ENCODE measurements at regions of chr1 and their contacts with region 1.

Region 1: GRCh38 chr1:161045750-161046571 is at the start of gene USF1:
- DNase-seq: peak; percentile 94 to 98 (median 95)
- ATAC-seq: peak; percentile 92
- H3K4me3 ChIP-seq: peak within 1 kb of the TSS; percentile 75
- H3K27ac ChIP-seq: peak within 1 kb of the TSS; percentile 95
- H3K4me1 ChIP-seq: peaks cover 10 to 12% of the 10 kb centered on the region in 2 experiments; a peak in 3 of 5 replicates
- H3K27me3 ChIP-seq: no peaks in the 10 kb centered on the region
- CTCF ChIP-seq: no peak
- EP300 ChIP-seq: 0 out of 2 replicates have a peak, but pooled peaks have one; percentile 6
- POLR2A ChIP-seq: peak; percentile 93
- RAD21 ChIP-seq: peak in 1 of 2 experiments; percentile 18; a peak in 1 of 4 replicates
- polyA plus RNA-seq, gene USF1: 7.4 to 46.3 TPM

Region 2: GRCh38 chr1:160451119-160451858 is 594.7 kb before region 1 on chr1:
- CTCF ChIA-PET with region 1: no interaction called
- POLR2A ChIA-PET with region 1: no interaction called
- in situ Hi-C with region 1: no loop called
- intact Hi-C with region 1: no loop called
- DNase-seq: no peak
- ATAC-seq: no peak
- H3K4me3 ChIP-seq: no peak overlapping the region
- H3K27ac ChIP-seq: no peak overlapping the region
- H3K4me1 ChIP-seq: peaks cover 0 to 7% of the 10 kb centered on the region in 2 experiments; a peak in 4 of 5 replicates
- H3K27me3 ChIP-seq: no peaks in the 10 kb centered on the region
- CTCF ChIP-seq: no peak
- EP300 ChIP-seq: no peak
- POLR2A ChIP-seq: no peak
- RAD21 ChIP-seq: no peak

Region 3: GRCh38 chr1:160997323-160998038 is 48.5 kb before region 1 on chr1:
- CTCF ChIA-PET with region 1: no interaction called
- POLR2A ChIA-PET with region 1: interaction called, 8 read pairs
- in situ Hi-C with region 1: no loop called
- intact Hi-C with region 1: loop called (anchors 2 kb)
- DNase-seq: peak; percentile 67 to 85 (median 76)
- ATAC-seq: peak; percentile 93
- H3K4me3 ChIP-seq: no peak overlapping the region
- H3K27ac ChIP-seq: peak overlapping the region; percentile 52
- H3K4me1 ChIP-seq: peaks cover 7 to 20% of the 10 kb centered on the region in 2 experiments; a peak in 3 of 5 replicates
- H3K27me3 ChIP-seq: no peaks in the 10 kb centered on the region
- CTCF ChIP-seq: peak; percentile 91 to 93 (median 92)
- EP300 ChIP-seq: peak; percentile 29; the same call in 1 of the 2 replicates
- POLR2A ChIP-seq: no peak; the same call in 1 of the 2 replicates
- RAD21 ChIP-seq: peak; percentile 77 to 95

Region 4: DNA sequence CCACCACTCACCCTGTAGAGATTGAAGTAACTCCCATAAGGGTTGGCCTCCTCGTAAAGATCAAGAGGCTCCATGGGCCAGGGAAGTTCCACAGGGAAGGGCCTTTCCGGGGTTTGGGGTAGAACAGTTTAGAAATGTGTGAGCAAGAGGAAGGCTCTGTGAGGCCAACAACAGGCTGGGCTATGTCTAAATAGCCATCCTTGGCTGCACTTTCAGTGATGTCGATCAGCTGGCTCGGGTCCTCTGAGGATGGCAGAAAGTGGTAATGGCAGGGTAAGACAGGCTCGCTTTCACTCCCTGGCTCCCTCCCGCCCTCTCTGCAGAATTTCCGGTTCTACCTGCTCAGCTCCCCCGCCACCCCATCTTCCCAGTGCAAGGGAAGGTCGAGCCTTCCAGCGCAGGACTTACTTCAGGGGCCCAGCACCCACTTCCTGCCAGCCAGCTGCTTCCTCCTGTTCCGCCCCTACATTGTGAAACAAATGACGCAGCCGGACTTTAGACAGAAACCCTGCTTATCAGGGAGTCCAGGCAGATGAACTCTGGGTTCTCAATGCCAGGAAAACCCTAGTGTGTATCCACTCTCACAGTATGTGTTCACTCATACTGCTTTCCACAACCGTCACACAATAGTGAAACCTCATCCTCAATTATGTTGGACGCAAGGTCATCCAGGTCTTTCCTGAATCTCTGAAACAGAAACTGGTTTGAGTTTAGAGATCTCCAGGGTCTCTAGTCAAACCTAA is 32.3 kb before region 1 on chr1:
- CTCF ChIA-PET with region 1: no interaction called
- POLR2A ChIA-PET with region 1: interaction called, 18 read pairs
- in situ Hi-C with region 1: no loop called
- intact Hi-C with region 1: loop called (anchors 1 kb)
- DNase-seq: peak; percentile 71 to 97 (median 84)
- ATAC-seq: peak; percentile 85
- H3K4me3 ChIP-seq: peak overlapping the region; percentile 32
- H3K27ac ChIP-seq: peak overlapping the region; percentile 100
- H3K4me1 ChIP-seq: peaks cover 55 to 56% of the 10 kb centered on the region in 2 experiments
- H3K27me3 ChIP-seq: no peaks in the 10 kb centered on the region
- CTCF ChIP-seq: no peak
- EP300 ChIP-seq: peak; percentile 93
- POLR2A ChIP-seq: peak; percentile 73
- RAD21 ChIP-seq: 0 out of 4 replicates have a peak, but pooled peaks of 1 of the 2 experiments have one; percentile 18

Region 5: GRCh38 chr1:161021165-161021960 is 24.6 kb before region 1 on chr1:
- CTCF ChIA-PET with region 1: no interaction called
- POLR2A ChIA-PET with region 1: interaction called, 18 read pairs
- in situ Hi-C with region 1: no loop called
- intact Hi-C with region 1: no loop called
- DNase-seq: peak; percentile 96 to 98 (median 98)
- ATAC-seq: peak; percentile 89
- H3K4me3 ChIP-seq: peak overlapping the region; percentile 87
- H3K27ac ChIP-seq: peak overlapping the region; percentile 96
- H3K4me1 ChIP-seq: peaks cover 26 to 30% of the 10 kb centered on the region in 2 experiments
- H3K27me3 ChIP-seq: no peaks in the 10 kb centered on the region
- CTCF ChIP-seq: no peak
- EP300 ChIP-seq: no peak
- POLR2A ChIP-seq: peak; percentile 94
- RAD21 ChIP-seq: no peak

Region 6: GRCh38 chr1:161071886-161072371 is 26.0 kb after region 1 on chr1:
- CTCF ChIA-PET with region 1: no interaction called
- POLR2A ChIA-PET with region 1: interaction called, 19 read pairs
- in situ Hi-C with region 1: no loop called
- intact Hi-C with region 1: no loop called
- DNase-seq: peak; percentile 77 to 80 (median 78)
- ATAC-seq: peak; percentile 90
- H3K4me3 ChIP-seq: no peak overlapping the region
- H3K27ac ChIP-seq: no peak overlapping the region
- H3K4me1 ChIP-seq: peaks cover 22 to 23% of the 10 kb centered on the region in 2 experiments
- H3K27me3 ChIP-seq: no peaks in the 10 kb centered on the region
- CTCF ChIP-seq: peak; percentile 86 to 91 (median 90)
- EP300 ChIP-seq: no peak
- POLR2A ChIP-seq: no peak
- RAD21 ChIP-seq: peak; percentile 75 to 88

Measured in K562 (cell line).